ENCODE measurements at regions of chr5 and their contacts with region 1.

Region 1: DNA sequence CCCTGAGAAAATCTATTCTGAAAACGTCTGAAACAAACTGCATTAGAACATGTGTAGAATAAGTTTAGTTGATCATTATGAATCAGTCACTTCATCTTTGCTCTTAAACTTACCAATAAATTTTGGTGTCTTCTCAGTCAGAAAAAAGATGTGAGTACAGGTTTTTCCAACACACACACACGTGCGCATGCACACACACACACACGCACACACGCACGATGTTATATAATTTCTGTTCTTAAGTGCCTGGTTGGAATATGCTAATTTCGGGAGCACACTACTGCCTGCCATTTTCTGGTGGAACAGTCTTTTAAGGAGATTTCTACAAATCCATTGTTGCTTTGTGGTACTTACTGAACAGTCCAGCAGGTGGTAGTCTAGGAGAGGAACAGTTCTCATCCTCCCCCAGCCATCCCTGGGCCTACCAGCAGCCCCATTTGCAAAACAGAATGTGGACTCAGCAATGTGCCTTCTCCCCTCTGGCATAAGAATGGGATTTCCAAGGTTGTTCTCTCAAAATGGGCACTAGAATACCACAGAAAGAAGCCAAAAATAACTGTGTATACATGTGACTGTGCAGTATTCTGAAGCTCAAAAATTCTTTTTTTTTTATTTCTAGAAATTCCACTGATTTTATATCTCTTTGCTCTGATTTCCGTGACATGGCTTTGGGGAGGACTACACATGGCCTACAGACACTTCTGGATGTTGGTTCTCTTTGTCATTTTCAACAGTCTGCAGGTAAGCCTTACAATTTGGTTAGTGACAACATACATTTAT is 281.3 kb downstream of the ARRDC3 start:
- DNase-seq: peak; percentile 66 to 68
- ATAC-seq: peak; percentile 92

Region 2: GRCh38 chr5:90932052-90932699 is 169.6 kb before region 1 on chr5:
- intact Hi-C with region 1: loop called in 1 of 2 experiments (anchors 5 kb)
- DNase-seq: peak; percentile 13 to 31
- ATAC-seq: peak; percentile 74